Endothelial cell of umbilical vein (primary cell): ENCODE measurements at regions of chr4 and their contacts with region 1.

Region 1: GRCh38 chr4:107824353-107825071 is at the start of gene SGMS2:
- DNase-seq: peak; percentile 91
- H3K4me3 ChIP-seq: peak within 1 kb of the TSS; percentile 83 to 94 (median 91)
- H3K27ac ChIP-seq: peak within 1 kb of the TSS; percentile 86
- H3K4me1 ChIP-seq: peaks cover 17% of the 10 kb centered on the region
- H3K27me3 ChIP-seq: no peaks in the 10 kb centered on the region
- CTCF ChIP-seq: no peak
- POLR2A ChIP-seq: peak; percentile 33
- total RNA-seq, gene SGMS2: 33.0 and 35.9 TPM in 2 replicates

Region 2: GRCh38 chr4:107757864-107758476 is 66.5 kb before region 1 on chr4:
- CTCF ChIA-PET with region 1: interaction called, 24 read pairs
- POLR2A ChIA-PET with region 1: no interaction called
- dilution Hi-C with region 1: no loop called
- intact Hi-C with region 1: loop called (anchors 2 kb)
- DNase-seq: peak; percentile 36
- H3K4me3 ChIP-seq: no peak overlapping the region
- H3K27ac ChIP-seq: no peak overlapping the region
- H3K4me1 ChIP-seq: no peaks in the 10 kb centered on the region
- H3K27me3 ChIP-seq: peaks cover 4 to 5% of the 10 kb centered on the region in 2 experiments
- CTCF ChIP-seq: peak in 1 of 2 donors; percentile 24
- POLR2A ChIP-seq: no peak

Region 3: GRCh38 chr4:107863850-107864371 is 39.4 kb after region 1 on chr4:
- CTCF ChIA-PET with region 1: interaction called, 4 read pairs
- POLR2A ChIA-PET with region 1: interaction called, 3 read pairs
- dilution Hi-C with region 1: no loop called
- intact Hi-C with region 1: loop called (anchors 1 kb)
- DNase-seq: peak; percentile 77
- H3K4me3 ChIP-seq: no peak overlapping the region
- H3K27ac ChIP-seq: peak overlapping the region; percentile 79
- H3K4me1 ChIP-seq: peaks cover 27% of the 10 kb centered on the region
- H3K27me3 ChIP-seq: no peaks in the 10 kb centered on the region
- CTCF ChIP-seq: no peak
- POLR2A ChIP-seq: no peak

Region 4: DNA sequence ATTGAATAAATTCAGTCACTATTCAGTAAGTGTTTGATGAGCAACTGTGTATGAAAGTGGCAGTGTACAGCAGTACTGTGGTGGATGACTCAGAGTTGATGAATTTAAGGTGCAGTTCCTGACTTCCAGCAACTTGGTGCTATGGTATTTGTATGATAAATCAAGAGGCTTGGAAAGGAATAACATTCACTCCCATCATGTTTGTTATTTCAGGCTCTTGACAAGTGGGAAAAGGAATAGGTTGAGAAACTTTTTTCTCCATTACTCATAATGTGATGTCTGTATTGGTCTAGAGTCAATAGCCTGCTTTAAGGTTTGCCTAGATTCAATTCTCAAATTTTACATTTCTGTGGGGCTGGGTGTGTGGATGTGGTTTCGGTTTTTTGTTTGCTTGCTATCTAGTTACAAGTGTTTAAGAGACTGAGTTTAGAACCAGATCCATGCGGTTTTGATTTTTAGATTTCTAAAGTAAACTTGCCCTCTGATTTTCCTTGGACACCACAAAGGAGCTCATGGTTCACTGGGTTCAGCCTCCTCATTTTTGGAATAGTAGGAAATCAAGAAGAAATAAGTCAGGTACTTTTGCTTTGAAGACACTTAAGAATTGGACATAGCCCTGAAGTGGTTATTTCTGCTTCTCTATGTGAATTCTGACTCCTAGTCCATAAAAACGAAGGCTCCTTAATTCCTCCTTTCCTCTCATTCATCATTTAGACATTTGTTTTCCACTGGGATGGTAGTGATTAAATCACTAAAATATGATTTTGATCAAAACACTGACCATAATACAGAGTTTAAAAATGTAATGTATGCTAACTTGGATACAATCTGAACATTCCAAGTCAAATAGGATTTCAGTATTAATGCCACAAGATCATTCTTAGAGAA is 71.9 kb after region 1 on chr4:
- CTCF ChIA-PET with region 1: interaction called, 5 read pairs
- POLR2A ChIA-PET with region 1: interaction called, 9 read pairs
- dilution Hi-C with region 1: no loop called
- intact Hi-C with region 1: loop called (anchors 1 kb)
- DNase-seq: peak; percentile 97
- H3K4me3 ChIP-seq: peak overlapping the region in 2 of 3 experiments; percentile 15 to 59
- H3K27ac ChIP-seq: peak overlapping the region; percentile 99
- H3K4me1 ChIP-seq: peaks cover 34% of the 10 kb centered on the region
- H3K27me3 ChIP-seq: no peaks in the 10 kb centered on the region
- CTCF ChIP-seq: no peak
- POLR2A ChIP-seq: peak; percentile 74

Region 5: GRCh38 chr4:107930821-107931774 is 106.6 kb after region 1 on chr4 and contains the start of gene CYP2U1:
- CTCF ChIA-PET with region 1: interaction called, 3 read pairs
- POLR2A ChIA-PET with region 1: no interaction called
- dilution Hi-C with region 1: no loop called
- intact Hi-C with region 1: loop called (anchors 1 kb)
- DNase-seq: peak; percentile 87
- H3K4me3 ChIP-seq: peak within 1 kb of the TSS; percentile 22 to 76 (median 73)
- H3K27ac ChIP-seq: peak within 1 kb of the TSS; percentile 12
- H3K4me1 ChIP-seq: peaks cover 16% of the 10 kb centered on the region
- H3K27me3 ChIP-seq: no peaks in the 10 kb centered on the region
- CTCF ChIP-seq: no peak
- POLR2A ChIP-seq: no peak
- total RNA-seq, gene CYP2U1: 5.4 and 5.8 TPM in 2 replicates

Region 6: GRCh38 chr4:108080747-108081146 is 256.2 kb after region 1 on chr4:
- CTCF ChIA-PET with region 1: no interaction called
- POLR2A ChIA-PET with region 1: no interaction called
- dilution Hi-C with region 1: no loop called
- intact Hi-C with region 1: no loop called
- DNase-seq: no peak
- H3K4me3 ChIP-seq: no peak overlapping the region
- H3K27ac ChIP-seq: no peak overlapping the region
- H3K4me1 ChIP-seq: no peaks in the 10 kb centered on the region
- H3K27me3 ChIP-seq: peaks cover 2% of the 10 kb centered on the region in 2 experiments
- CTCF ChIP-seq: no peak
- POLR2A ChIP-seq: no peak